Activated naive CD4-positive, alpha-beta T cell treated with anti-CD3 and anti-CD28 coated beads for 36 hours (primary cell): ENCODE measurements at regions of chr17 and their contacts with region 1.

Region 1: DNA sequence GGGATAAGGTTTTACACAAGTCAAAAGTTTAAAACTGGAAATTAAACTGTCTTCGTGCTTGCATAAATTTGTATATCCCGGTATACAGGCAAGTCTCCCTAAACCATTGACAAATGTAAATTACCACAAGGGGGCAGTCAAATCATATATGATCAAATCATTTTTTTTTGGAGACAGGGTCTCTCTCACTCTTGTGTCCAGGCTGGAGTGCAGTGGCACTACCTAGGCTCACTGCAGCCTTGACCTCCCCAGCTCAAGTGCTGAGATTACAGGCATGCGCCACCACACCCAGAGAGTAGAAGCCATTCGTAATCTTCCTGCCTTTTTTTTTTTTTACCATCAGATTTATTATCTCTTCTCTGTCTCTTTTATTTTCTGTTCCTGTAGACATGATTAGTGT is 18.5 kb downstream of the TOP2A start:
- DNase-seq: no peak
- H3K4me3 Mint-ChIP-seq: no peak overlapping the region
- H3K27ac Mint-ChIP-seq: no peak overlapping the region
- H3K4me1 Mint-ChIP-seq: peaks cover 17% of the 10 kb centered on the region
- H3K27me3 Mint-ChIP-seq: no peaks in the 10 kb centered on the region

Region 2: GRCh38 chr17:40242774-40243173 is 156.4 kb before region 1 on chr17:
- CTCF ChIA-PET with region 1: no interaction called
- intact Hi-C with region 1: no loop called
- DNase-seq: no peak
- H3K4me3 Mint-ChIP-seq: no peak overlapping the region
- H3K27ac Mint-ChIP-seq: no peak overlapping the region
- H3K4me1 Mint-ChIP-seq: peaks cover 33% of the 10 kb centered on the region
- H3K27me3 Mint-ChIP-seq: no peaks in the 10 kb centered on the region

Region 3: DNA sequence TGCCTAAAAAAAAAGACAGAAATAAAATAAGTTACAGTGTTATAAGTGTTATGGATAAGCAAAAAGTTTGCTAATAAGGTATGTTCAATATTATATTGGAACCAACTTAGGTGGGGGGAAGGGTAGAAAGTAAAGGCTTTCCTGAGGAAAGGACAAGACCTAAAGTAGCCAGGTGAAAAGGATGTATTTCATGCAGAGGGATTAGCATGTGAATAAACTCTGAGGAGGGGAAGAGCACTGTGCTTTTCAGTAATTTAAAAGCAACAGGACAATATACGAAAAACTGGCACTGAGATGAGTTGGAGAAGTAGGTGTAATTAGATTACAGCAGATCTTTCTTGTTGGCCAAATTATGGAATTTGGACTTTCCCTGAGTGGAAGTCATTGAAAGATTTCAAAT is 10.9 kb after region 1 on chr17:
- CTCF ChIA-PET with region 1: interaction called, 10 read pairs
- intact Hi-C with region 1: no loop called
- DNase-seq: no peak
- H3K4me3 Mint-ChIP-seq: no peak overlapping the region
- H3K27ac Mint-ChIP-seq: no peak overlapping the region
- H3K4me1 Mint-ChIP-seq: no peaks in the 10 kb centered on the region
- H3K27me3 Mint-ChIP-seq: no peaks in the 10 kb centered on the region

Region 4: DNA sequence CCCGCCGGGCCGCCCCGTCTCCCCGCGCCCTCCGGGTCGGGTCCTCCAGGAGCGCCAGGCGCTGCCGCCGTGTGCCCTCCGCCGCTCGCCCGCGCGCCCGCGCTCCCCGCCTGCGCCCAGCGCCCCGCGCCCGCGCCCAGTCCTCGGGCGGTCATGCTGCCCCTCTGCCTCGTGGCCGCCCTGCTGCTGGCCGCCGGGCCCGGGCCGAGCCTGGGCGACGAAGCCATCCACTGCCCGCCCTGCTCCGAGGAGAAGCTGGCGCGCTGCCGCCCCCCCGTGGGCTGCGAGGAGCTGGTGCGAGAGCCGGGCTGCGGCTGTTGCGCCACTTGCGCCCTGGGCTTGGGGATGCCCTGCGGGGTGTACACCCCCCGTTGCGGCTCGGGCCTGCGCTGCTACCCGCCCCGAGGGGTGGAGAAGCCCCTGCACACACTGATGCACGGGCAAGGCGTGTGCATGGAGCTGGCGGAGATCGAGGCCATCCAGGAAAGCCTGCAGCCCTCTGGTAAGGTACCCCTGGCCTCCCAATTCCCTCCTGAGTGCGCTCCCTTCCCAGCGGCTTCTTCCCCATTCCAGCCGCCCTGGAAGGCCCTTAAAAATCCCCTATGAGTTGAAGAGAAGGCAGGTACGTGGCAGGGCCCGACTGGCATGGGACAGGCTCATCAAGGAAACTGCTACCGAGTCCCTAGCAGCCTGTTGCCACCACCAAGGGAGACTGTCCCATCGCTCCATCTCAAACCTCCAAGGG is 44.6 kb after region 1 on chr17:
- CTCF ChIA-PET with region 1: interaction called, 5 read pairs
- intact Hi-C with region 1: loop called (anchors 1 kb)
- DNase-seq: peak; percentile 74
- H3K4me3 Mint-ChIP-seq: peak overlapping the region; percentile 78
- H3K27ac Mint-ChIP-seq: peak overlapping the region; percentile 76
- H3K4me1 Mint-ChIP-seq: peaks cover 29% of the 10 kb centered on the region
- H3K27me3 Mint-ChIP-seq: peaks cover 4% of the 10 kb centered on the region

Region 5: DNA sequence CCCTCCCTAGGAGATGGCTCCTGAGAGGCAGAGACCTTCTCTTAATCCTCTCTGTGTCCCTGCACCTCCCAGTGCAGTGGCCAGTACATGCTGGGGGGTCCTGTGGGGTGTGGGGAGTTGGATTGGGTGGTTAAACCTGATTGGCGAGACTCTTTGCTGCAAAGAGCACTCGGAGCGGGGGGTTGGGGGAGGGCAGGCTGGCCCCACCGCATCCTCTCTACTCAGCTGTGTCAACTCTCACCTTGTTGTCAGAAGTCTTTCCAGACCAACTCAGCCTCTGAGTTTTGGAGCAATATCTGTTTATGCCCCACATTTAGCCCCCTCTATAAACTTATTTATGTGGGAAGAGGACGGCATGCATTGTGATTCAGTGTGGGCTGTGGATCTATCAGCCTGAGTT is 208.5 kb after region 1 on chr17:
- CTCF ChIA-PET with region 1: no interaction called
- intact Hi-C with region 1: no loop called
- DNase-seq: peak; percentile 70
- H3K4me3 Mint-ChIP-seq: peak overlapping the region; percentile 38
- H3K27ac Mint-ChIP-seq: peak overlapping the region; percentile 34
- H3K4me1 Mint-ChIP-seq: peaks cover 95% of the 10 kb centered on the region
- H3K27me3 Mint-ChIP-seq: no peaks in the 10 kb centered on the region